AG04450 (cell line): ENCODE measurements at regions of chr14 and their contacts with region 1.

Region 1: DNA sequence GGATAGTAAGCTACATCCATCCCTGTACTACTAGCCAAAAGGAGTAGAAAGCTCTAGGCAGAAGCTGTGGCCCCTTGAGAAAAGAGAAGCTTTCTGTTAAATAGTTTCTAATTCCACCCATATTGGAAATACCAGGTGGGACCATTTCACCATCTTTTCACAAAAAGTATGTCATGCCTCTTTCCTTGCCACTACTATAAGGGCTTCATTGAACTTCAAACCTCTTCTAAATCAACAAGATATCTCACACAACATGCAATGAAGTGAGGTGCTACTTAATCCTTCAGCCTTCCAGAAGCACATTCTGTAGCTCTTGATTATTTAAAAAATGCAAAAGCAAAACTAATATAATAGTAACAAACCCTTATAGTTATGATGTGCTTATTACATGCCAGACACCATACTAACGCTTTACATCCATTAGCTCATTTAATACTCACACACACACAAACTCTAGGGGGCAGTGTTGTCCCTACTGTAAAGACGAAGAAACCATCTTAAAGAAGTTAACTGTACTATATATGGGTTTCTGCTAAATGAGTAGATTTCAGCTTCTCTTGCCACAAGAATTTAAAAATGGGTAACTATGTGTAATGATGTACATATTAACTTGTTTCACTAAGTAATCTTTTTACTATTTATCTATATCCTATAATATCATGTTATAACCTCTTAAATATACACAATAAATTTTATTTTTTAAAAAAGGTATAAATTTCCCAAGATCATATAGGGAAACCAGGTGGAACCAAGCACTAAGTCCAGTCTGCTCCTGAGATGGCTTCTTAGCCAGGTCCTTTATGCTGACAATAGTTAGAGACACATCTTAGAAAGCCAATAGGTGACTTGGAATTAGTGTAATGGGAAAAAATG is 124.4 kb downstream of the RPS29 start:
- DNase-seq: peak; percentile 59
- H3K4me3 ChIP-seq: no peak overlapping the region
- H3K27ac ChIP-seq: no peak overlapping the region
- H3K27me3 ChIP-seq: no peaks in the 10 kb centered on the region
- CTCF ChIP-seq: peak; percentile 76

Region 2: DNA sequence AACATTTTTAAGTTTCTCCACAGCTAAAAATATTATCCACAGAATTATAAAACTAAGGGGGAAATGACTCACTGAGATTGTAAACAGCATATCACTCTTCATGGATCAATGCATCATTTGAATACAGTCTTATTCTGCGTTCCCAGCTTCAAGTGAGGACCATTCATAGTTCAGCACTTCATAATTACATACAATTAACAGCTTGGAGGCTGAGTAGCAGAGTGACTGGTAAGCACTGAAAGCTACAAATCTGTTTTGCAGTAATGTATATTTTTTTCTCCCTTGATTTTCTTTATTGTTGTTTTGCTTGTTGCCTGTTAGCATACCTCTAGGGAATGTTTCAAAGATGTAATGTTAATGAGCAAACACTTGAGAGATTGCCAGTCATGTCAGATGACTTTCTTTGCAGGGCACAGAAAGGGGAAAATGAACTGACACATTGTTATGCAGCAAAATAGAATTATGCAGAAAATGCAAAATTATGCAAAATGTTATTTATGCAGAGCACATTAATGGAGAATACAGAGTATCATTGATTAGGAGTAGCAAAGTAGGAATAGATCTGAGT is 14.1 kb before region 1 on chr14:
- CTCF ChIA-PET with region 1: interaction called, 53 read pairs
- POLR2A ChIA-PET with region 1: no interaction called
- DNase-seq: no peak
- H3K4me3 ChIP-seq: no peak overlapping the region
- H3K27ac ChIP-seq: no peak overlapping the region
- H3K27me3 ChIP-seq: no peaks in the 10 kb centered on the region
- CTCF ChIP-seq: no peak

Region 3: DNA sequence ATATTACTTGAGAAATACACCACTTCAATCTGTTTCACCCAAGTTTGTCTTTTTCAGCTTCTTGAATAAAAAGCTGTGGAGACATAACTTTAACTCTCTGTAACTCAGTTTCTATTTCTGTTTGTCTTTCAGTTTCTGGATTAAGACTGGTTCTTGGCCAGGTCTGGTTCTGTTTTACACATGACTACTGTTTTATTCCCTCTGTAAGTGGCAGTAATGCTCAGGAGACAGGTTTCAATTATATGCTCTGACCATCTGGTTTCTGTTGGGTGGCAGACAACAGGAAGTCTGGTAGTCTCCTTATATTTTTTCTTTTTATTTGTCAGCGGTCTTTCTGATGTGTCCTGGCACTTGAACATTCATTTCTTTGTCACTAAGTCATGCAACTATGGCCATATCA is 21.5 kb after region 1 on chr14:
- CTCF ChIA-PET with region 1: interaction called, 85 read pairs
- POLR2A ChIA-PET with region 1: no interaction called
- DNase-seq: no peak
- H3K4me3 ChIP-seq: no peak overlapping the region
- H3K27ac ChIP-seq: no peak overlapping the region
- H3K27me3 ChIP-seq: no peaks in the 10 kb centered on the region
- CTCF ChIP-seq: no peak

Region 4: GRCh38 chr14:49497725-49498348 is 36.1 kb after region 1 on chr14:
- CTCF ChIA-PET with region 1: interaction called, 170 read pairs
- POLR2A ChIA-PET with region 1: no interaction called
- DNase-seq: peak; percentile 37
- H3K4me3 ChIP-seq: no peak overlapping the region
- H3K27ac ChIP-seq: no peak overlapping the region
- H3K27me3 ChIP-seq: no peaks in the 10 kb centered on the region
- CTCF ChIP-seq: peak; percentile 92

Region 5: DNA sequence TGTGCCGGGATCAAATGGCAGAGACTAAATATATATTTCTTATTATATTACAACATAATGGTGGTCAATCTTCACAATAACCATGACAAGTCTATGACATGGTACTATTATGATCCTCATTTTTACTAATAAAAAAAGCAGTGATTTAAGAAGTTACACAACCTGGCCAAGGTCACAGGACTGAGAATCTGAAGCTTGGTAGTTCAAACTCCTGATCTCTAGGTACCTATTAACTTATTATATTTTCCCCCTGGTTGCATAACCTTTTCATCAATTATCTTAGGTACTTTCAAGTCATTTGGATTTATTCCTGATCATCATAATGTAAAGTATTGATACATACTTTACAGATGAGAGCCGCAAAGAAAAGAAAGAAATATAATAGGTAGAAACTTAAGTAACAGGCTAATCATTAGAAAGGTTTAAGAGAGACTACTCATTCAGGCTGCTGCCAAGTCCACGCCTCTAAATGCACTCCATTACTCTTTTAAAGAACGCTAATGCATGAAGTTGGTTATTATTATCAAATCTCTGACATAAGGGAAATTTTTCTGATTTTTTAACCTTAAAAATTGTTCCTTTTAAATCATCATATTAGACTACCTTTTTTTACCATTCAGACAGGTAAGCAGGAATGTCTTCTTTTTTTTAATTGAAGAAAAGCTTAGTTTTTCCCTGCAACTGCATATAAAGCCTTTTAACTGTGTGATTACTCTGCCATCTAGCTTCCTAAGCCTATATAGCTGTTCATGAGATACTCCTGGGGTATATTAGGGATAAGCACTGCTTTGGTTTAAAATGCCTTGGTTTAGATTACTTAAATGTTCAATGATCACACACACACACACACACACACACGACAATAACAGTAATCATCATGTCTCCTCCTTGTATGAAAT is 88.8 kb after region 1 on chr14:
- CTCF ChIA-PET with region 1: interaction called, 44 read pairs
- POLR2A ChIA-PET with region 1: no interaction called
- DNase-seq: no peak
- H3K4me3 ChIP-seq: no peak overlapping the region
- H3K27ac ChIP-seq: no peak overlapping the region
- H3K27me3 ChIP-seq: peaks cover 5% of the 10 kb centered on the region
- CTCF ChIP-seq: peak; percentile 53

Region 6: GRCh38 chr14:49585803-49586672 is 124.3 kb after region 1 on chr14 and contains the start of gene RPS29:
- CTCF ChIA-PET with region 1: interaction called, 37 read pairs
- POLR2A ChIA-PET with region 1: no interaction called
- DNase-seq: peak; percentile 99
- H3K4me3 ChIP-seq: peak within 1 kb of the TSS; percentile 95
- H3K27ac ChIP-seq: peak within 1 kb of the TSS; percentile 67
- H3K27me3 ChIP-seq: no peaks in the 10 kb centered on the region
- CTCF ChIP-seq: no peak
- polyA plus RNA-seq, gene RPS29: 3,597 and 3,950 TPM in 2 replicates

Region 7: GRCh38 chr14:49828640-49829039 is 366.9 kb after region 1 on chr14:
- CTCF ChIA-PET with region 1: interaction called, 12 read pairs
- POLR2A ChIA-PET with region 1: no interaction called
- DNase-seq: no peak
- H3K4me3 ChIP-seq: no peak overlapping the region
- H3K27ac ChIP-seq: no peak overlapping the region
- H3K27me3 ChIP-seq: no peaks in the 10 kb centered on the region
- CTCF ChIP-seq: no peak